A673 (cell line): ENCODE measurements at regions of chr9 and their contacts with region 1.

Region 1: GRCh38 chr9:9079473-9079872 is 1279.9 kb upstream of the DMAC1 start:
- DNase-seq: no peak
- H3K4me3 ChIP-seq: no peak overlapping the region
- H3K27ac ChIP-seq: no peak overlapping the region
- H3K4me1 ChIP-seq: no peaks in the 10 kb centered on the region
- H3K27me3 ChIP-seq: no peaks in the 10 kb centered on the region
- CTCF ChIP-seq: no peak

Region 2: DNA sequence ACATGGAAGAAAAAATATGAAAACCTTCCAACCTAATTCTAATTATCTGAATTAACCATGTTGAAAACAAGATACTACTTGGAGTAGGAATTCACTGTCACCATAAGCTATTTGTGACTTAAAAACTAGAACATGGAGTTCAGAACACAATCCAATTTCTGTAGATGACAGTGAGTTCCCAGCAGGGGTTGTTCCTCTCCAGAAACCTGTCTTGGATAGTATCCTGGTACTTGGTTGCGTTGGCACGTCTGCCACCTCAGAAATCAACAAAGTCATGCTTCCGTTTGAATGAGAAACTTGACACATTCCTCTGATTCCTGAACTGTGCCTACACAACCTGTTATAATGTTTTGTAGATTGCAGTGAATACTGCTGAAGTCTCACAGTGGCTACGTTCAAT is 490.0 kb before region 1 on chr9:
- CTCF ChIA-PET with region 1: no interaction called
- POLR2A ChIA-PET with region 1: no interaction called
- intact Hi-C with region 1: no loop called
- DNase-seq: no peak
- H3K4me3 ChIP-seq: no peak overlapping the region
- H3K27ac ChIP-seq: no peak overlapping the region
- H3K4me1 ChIP-seq: no peaks in the 10 kb centered on the region
- H3K27me3 ChIP-seq: no peaks in the 10 kb centered on the region
- CTCF ChIP-seq: no peak

Region 3: DNA sequence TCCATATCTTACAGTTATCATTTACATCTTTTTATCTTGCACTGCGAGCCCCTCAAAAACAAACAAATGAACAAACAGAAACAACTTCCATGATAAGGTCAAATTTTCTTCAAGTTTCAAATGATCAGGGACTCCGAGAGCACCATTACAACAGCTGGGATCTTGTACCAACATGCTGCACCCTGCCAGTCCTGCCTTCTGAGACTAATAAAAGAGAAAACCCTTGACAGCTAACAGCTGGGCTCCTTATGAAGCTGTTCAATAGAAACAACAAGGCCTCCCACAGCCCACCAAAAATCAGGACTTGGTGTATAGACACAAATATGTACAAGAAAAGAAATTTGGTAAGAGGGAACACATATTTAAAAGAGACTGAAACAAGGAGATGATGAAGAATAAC is 294.6 kb before region 1 on chr9:
- CTCF ChIA-PET with region 1: no interaction called
- POLR2A ChIA-PET with region 1: no interaction called
- intact Hi-C with region 1: no loop called
- DNase-seq: no peak
- H3K4me3 ChIP-seq: no peak overlapping the region
- H3K27ac ChIP-seq: no peak overlapping the region
- H3K4me1 ChIP-seq: no peaks in the 10 kb centered on the region
- H3K27me3 ChIP-seq: peaks cover 47% of the 10 kb centered on the region
- CTCF ChIP-seq: no peak

Region 4: DNA sequence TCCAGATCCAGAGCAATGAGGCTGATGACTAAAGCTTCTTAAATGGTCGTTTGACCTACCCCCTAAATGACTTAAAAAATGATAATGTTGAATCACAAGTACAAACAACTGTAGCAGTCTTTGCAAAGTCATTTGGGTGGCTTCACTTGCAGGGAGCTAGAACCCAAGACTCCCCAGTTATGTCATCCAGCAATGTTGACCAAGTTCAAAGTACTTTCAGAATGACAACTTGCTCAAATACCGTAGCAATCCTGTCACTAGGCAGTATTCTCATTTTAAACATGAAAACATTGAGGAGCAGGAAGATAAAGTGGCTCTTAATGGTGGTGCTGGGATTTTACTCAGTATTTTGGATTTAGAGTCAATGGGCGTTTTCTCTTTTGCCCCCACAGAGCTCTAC is 62.9 kb before region 1 on chr9:
- CTCF ChIA-PET with region 1: no interaction called
- POLR2A ChIA-PET with region 1: no interaction called
- intact Hi-C with region 1: loop called (anchors 5 kb)
- DNase-seq: no peak
- H3K4me3 ChIP-seq: no peak overlapping the region
- H3K27ac ChIP-seq: no peak overlapping the region
- H3K4me1 ChIP-seq: no peaks in the 10 kb centered on the region
- H3K27me3 ChIP-seq: no peaks in the 10 kb centered on the region
- CTCF ChIP-seq: no peak